Left ventricle myocardium inferior (tissue), 1 donor: ENCODE measurements at regions of chr11 and their contacts with region 1.

Region 1: GRCh38 chr11:66580803-66581202 is 12.1 kb downstream of the CCDC87 start:
- DNase-seq: no peak
- H3K4me3 ChIP-seq: no peak overlapping the region
- H3K27ac ChIP-seq: no peak overlapping the region
- H3K4me1 ChIP-seq: peaks cover 6% of the 10 kb centered on the region
- H3K27me3 ChIP-seq: no peaks in the 10 kb centered on the region
- CTCF ChIP-seq: no peak

Region 2: GRCh38 chr11:66677599-66678375 is 97.0 kb after region 1 on chr11 and contains the start of gene RBM4B:
- intact Hi-C with region 1: loop called (anchors 5 kb)
- DNase-seq: peak; percentile 98
- H3K4me3 ChIP-seq: peak within 1 kb of the TSS; percentile 83
- H3K27ac ChIP-seq: peak within 1 kb of the TSS; percentile 94
- H3K4me1 ChIP-seq: peaks cover 49% of the 10 kb centered on the region
- H3K27me3 ChIP-seq: no peaks in the 10 kb centered on the region
- CTCF ChIP-seq: no peak
- total RNA-seq, gene RBM4B: 11.8 TPM